Motor neuron (in vitro differentiated cells): ENCODE measurements at regions of chr1 and their contacts with region 1.

Region 1: DNA sequence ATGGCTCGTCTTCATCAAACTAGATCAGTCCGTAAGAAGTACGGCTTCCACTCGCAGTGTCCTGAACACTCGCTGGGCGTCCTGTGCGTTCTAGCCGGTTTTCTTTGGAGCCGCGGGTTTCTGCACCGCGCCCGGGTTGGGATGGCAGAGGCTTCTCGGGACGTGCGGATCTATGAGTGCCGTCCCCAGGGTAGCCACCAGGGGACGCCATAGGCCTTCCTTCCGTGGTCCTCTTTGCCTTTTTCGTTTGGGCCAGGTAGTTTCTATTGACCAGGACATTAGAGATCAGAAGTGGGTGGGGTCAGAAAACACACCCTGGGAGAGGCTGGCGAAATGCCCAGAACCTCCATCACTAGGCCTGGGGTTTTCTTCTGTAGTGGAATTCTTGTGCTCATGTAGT is 273.8 kb downstream of the FAM72C start:
- ATAC-seq: peak in 2 of 8 experiments; percentile 70 to 84
- H3K4me3 ChIP-seq: no peak overlapping the region
- H3K27ac ChIP-seq: no peak overlapping the region
- H3K4me1 ChIP-seq: no peaks in the 10 kb centered on the region

Region 2: DNA sequence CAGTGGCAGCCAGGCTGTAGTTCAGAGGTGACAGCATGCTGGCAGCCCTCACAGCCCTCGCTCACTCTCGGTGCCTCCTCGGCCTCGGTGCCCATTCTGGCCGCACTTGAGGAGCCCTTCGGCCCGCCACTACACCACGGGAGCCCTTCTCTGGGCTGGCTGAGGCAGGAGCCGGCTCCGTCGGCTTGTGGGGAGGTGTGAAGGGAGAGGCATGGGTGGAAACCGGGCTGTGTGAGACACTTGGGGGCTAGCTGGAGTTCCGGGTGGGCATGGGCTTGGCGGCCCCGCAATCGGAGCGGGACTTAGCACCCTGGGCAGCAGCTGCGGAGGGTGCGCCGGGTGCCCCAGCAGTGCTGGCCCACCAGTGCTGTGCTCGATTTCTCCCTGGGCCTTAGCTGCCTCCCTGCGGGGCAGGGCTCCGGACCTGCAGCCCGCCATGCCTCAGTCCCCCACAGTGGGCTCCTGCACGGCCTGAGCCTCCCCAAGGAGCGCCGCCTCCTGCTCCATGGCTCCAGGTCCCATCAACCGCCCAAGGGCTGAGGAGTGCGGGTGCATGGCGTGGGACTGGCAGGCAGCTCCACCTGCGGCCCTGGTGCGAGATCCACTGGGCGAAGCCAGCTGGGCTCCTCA is 123.0 kb before region 1 on chr1:
- in situ Hi-C with region 1: loop called in 2 of 9 experiments (anchors 25 kb)
- ATAC-seq: no peak
- H3K4me3 ChIP-seq: no peak overlapping the region
- H3K27ac ChIP-seq: no peak overlapping the region
- H3K4me1 ChIP-seq: no peaks in the 10 kb centered on the region